Aorta (tissue), 5 donors: ENCODE measurements at regions of chr9 and their contacts with region 1.

Region 1: DNA sequence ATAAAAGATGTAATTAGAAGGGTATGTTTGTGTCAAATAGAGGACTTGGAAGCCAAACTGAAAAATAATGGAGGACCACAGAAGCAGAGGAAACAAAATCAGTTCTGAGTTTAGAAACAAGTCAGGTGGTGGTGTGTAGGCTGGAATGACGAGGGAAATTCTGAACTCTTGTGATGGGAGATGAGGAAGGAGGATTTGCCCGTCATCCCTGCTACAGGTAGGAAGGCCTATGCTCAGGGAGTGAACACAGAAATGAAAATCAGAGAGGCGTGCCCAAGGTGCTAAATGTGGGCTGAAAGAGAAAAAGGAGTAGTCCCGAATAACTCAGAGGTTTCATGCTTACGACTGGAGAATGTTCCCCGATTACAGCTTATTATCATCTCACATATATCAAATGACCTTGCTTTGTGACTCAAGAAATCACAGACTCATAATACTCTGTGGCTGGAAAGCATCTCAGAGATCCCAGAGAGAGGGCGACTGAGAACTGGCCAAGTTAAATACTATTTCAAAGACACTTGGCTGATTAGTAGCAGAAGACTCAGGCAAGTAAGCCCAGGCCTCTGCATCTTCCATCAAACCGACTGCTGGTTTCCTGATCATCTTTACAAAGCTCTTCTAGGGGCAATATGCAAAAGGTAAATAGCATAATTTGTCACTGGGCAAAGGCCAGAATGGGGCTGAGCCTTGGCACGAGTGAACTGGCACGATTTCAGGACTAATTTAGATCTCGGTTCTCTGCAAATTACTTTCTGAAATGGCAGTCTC is 126.0 kb downstream of the SUSD1 start:
- DNase-seq: no peak
- ATAC-seq: peak; percentile 74
- H3K4me3 ChIP-seq: no peak overlapping the region
- H3K27ac ChIP-seq: no peak overlapping the region
- H3K4me1 ChIP-seq: peaks cover 4 to 6% of the 10 kb centered on the region in 2 donors
- H3K27me3 ChIP-seq: no peaks in the 10 kb centered on the region

Region 2: GRCh38 chr9:112012026-112012902 is 36.8 kb before region 1 on chr9:
- intact Hi-C with region 1: loop called in 1 of 2 experiments (anchors 5 kb)
- DNase-seq: peak; percentile 84 to 85
- ATAC-seq: peak; percentile 86
- H3K4me3 ChIP-seq: no peak overlapping the region
- H3K27ac ChIP-seq: peak overlapping the region; percentile 81 to 99
- H3K4me1 ChIP-seq: peaks cover 0 to 4% of the 10 kb centered on the region in 2 donors
- H3K27me3 ChIP-seq: no peaks in the 10 kb centered on the region